ENCODE measurements at regions of chr15 and their contacts with region 1.

Region 1: GRCh38 chr15:89776274-89777072 is at the start of gene MESP2:
- DNase-seq: peak; percentile 35
- H3K4me3 ChIP-seq: peak within 1 kb of the TSS; percentile 39
- CTCF ChIP-seq: peak; percentile 47

Region 2: DNA sequence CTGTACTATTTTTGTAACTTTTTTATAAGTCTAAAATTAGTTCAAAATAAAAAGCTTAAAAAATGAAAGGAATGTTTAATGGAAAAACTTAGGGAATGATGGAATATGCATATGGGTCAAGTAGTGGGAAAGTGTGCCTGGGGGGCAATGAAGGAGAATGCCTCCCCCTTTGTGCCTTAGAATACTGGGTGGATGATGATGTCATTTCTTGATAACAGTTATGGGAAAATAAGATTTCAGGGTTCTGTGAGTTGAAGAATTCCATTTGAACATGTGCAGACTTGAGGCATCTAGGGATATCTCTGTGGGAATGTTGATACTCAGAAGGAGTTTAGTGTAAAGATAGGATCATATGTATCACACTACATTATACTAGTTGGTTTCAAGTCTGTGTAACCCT is 72.1 kb before region 1 on chr15:
- in situ Hi-C with region 1: no loop called
- DNase-seq: no peak
- H3K4me3 ChIP-seq: no peak overlapping the region
- CTCF ChIP-seq: no peak

Region 3: DNA sequence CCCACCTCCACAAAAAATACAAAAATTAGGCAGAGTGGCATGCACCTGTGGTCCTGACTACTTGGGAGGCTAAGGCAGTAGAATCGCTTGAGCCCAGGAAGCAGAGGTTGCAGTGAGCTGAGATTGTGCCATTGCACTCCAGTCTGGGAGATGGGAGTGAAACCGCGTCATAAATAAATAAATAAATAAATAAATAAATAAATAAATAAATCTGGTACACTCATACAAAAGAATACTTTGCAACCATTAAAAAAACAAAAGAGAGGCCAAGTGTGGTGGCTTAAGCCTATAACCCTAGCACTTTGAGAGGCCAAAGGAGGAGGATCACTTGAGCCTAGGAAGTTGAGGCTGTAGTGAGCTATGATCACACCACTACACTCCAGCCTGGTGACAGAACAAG is 53.4 kb before region 1 on chr15:
- in situ Hi-C with region 1: loop called (anchors 5 kb)
- DNase-seq: no peak
- H3K4me3 ChIP-seq: no peak overlapping the region
- CTCF ChIP-seq: no peak

Region 4: DNA sequence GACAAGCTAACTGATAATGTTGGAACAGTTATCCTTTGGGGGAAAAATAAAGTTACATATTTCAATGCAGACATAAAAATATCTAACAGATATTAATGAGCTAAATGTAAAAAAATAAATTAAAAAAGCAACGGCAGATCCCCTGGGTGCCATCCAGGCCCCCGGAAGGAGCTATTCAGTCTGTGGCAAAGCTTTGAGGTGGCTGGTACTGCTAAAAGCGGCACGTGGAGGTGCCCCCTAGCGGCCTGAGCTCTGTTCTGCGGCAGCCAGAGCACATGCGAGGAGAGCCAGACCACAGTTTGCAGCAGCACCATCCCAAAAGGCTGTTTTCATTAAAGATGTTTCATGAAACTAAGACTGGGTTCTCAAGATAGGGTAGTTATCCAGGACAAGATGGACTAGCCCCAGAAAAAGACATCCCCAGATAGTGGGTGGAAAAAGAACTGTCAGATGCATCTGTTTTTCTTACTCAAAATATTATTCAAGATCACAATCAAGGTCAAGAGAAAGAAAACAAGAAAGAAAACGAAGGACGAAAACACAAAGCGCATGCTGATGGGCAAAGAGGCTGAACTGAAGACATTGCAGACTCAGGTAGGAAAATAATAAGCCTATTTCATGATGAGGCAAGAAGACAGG is 98.6 kb after region 1 on chr15:
- in situ Hi-C with region 1: loop called (anchors 10 kb)
- DNase-seq: peak; percentile 40
- H3K4me3 ChIP-seq: no peak overlapping the region
- CTCF ChIP-seq: peak; percentile 97